Posterior vena cava (tissue), 2 donors: ENCODE measurements at regions of chr1 and their contacts with region 1.

Region 1: DNA sequence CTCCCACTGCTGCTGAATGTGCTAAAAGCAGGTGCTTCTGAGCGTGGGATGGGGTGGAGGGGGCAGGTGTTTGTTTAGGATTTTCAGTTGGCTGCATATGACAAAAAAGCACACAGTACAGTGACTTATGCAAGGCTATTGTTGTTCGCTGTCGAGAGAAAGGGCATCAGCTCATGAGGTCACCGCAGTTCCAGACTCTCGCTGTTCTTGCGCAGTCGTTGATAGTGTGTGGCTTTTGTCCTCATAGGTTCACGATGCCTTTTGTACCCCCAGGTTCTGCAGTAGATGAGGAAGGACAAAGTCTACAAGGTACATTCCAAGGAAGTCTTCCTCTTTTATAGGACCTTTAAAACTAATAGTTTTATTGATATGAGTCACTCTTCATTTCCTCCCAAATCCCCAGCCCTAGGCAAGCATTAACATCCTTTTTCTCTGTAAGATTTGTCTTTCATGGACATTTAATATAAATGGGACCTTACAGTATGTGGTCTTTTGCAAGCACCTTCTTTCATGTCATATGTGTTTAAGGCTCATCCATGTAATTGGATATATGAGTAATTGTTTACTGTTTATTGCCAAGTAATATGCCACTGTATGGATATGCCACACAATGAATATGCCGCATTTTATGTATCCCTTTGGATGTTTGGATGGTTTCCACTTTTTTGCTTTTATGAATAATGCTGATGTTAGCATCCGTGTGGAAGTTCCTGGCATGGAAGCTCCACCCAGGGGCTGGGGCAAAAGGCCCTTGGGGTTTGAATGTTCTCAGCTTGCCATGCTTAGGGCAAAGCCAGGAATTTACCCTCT is 14.5 kb upstream of the NLRP3 start:
- DNase-seq: no peak

Region 2: GRCh38 chr1:247386687-247387086 is 14.8 kb before region 1 on chr1:
- intact Hi-C with region 1: no loop called
- DNase-seq: no peak

Region 3: DNA sequence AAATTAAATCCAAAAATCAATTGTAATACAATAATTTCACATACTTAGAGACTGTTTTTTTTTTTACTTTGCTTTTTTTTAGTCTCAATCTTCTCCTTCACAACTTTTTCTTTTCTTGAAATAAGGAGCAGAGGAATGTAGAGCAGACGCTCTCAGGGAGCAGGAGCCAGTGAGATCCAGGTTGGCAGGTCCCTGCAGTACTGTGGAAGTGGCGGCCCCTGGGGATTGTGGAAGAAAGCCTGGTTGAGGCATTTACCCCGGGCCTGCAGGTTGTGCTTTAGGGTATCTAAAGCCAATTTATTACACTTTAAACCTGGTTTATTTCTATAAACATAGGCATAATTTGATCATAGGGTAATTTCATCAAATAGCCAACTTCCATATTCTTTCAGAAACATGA is 522.4 kb after region 1 on chr1:
- intact Hi-C with region 1: loop called in 1 of 2 experiments (anchors 5 kb)
- DNase-seq: no peak